B cell (primary cell): ENCODE measurements at regions of chr2 and their contacts with region 1.

Region 1: DNA sequence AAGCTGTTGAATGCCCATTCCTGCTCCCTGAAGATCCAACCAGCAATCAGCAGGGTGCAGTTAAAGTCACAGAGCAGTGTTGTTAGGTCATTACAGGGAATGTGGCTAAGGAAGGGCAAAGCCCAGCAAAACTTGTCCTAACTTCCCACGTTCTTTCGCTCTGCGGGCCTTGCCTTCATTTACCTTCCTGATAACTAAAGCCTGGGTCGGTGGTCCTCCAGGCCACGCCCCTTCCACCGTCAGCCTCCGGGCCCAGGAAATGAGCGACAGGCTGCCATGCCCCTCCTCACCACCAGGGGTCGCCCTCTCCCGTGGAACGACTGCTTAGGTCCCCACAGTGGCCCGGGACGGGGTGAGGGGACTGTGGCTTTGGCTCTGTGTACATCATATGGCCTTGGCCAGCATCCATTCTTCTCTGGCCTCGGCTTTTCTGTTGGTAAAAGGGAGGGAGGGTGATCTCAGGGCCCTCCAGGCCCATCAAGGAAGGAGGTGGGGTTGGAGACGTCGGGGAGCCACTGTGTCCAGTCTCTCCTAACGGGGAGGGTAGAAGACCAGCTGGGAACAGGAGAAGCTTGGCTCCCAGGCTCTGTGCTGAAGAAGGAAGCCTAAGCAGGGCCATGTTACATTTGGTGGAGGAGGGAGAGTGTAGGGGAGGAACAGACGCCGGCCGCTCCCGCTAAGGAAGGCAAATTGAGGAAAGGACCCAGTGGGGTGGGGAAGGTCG is 2.2 kb downstream of the SH2D6 start:
- DNase-seq: peak; percentile 91
- ATAC-seq: peak; percentile 77
- H3K4me3 ChIP-seq: peak overlapping the region in 3 of 5 experiments; percentile 18 to 33 (median 18)
- H3K4me3 Mint-ChIP-seq: peak overlapping the region; percentile 84
- H3K27ac ChIP-seq: peak overlapping the region in 1 of 2 donors; percentile 25
- H3K27ac Mint-ChIP-seq: peak overlapping the region; percentile 92
- H3K4me1 ChIP-seq: peaks cover 23 to 32% of the 10 kb centered on the region in 2 donors
- H3K4me1 Mint-ChIP-seq: peaks cover 28% of the 10 kb centered on the region
- H3K27me3 ChIP-seq: no peaks in the 10 kb centered on the region
- H3K27me3 Mint-ChIP-seq: no peaks in the 10 kb centered on the region
- CTCF ChIP-seq: peak; percentile 100

Region 2: DNA sequence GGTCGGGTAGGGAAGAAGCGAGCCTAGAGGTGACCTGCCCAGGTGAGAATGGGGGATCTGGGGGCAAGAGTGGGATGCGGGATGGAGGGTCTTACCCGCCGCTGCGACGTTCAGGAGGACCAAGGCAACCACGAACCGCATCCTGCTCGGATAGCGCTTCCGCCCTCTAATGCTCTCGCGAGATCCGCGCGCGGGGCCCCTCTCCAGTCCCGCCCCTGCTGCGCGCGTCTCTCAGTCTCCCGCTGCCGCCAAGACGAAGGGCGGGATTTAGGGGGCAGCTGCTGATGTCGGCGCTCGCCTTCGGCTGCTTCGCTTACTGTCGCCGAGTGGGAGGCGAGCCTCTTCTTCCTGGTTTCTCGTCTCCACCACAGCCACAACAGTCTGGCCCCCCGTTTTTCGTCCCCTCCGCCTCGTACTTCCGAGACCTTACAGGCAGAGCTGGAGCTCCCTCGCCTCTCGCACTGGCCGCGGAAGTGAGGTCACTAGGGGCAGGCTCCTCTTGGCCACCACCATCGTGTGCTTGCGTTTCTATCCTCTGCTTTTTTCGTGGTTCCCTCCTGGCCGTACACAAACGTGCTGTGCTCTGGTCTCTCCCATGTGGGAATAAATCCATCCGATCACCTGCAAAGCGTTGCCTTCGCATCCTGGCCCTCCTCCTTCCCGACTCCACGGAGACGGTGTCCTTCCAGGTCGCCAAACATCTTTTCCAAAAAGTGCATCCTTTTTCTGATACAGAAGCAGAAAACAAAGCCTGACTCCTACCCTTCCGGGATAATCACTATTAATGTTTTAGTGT is 92.7 kb before region 1 on chr2 and contains the start of gene TGOLN2:
- CTCF ChIA-PET with region 1: interaction called, 4 read pairs
- POLR2A ChIA-PET with region 1: interaction called, 14 read pairs
- intact Hi-C with region 1: no loop called
- DNase-seq: peak; percentile 97
- ATAC-seq: peak; percentile 90
- H3K4me3 ChIP-seq: peak within 1 kb of the TSS; percentile 44 to 96 (median 86)
- H3K4me3 Mint-ChIP-seq: peak within 1 kb of the TSS; percentile 100
- H3K27ac ChIP-seq: peak within 1 kb of the TSS; percentile 83 to 99
- H3K27ac Mint-ChIP-seq: peak within 1 kb of the TSS; percentile 100
- H3K4me1 ChIP-seq: peaks cover 34 to 42% of the 10 kb centered on the region in 2 donors
- H3K4me1 Mint-ChIP-seq: peaks cover 59% of the 10 kb centered on the region
- H3K27me3 ChIP-seq: no peaks in the 10 kb centered on the region
- H3K27me3 Mint-ChIP-seq: no peaks in the 10 kb centered on the region
- CTCF ChIP-seq: no peak
- total RNA-seq, gene TGOLN2: 172 and 181 TPM in 2 replicates

Region 3: DNA sequence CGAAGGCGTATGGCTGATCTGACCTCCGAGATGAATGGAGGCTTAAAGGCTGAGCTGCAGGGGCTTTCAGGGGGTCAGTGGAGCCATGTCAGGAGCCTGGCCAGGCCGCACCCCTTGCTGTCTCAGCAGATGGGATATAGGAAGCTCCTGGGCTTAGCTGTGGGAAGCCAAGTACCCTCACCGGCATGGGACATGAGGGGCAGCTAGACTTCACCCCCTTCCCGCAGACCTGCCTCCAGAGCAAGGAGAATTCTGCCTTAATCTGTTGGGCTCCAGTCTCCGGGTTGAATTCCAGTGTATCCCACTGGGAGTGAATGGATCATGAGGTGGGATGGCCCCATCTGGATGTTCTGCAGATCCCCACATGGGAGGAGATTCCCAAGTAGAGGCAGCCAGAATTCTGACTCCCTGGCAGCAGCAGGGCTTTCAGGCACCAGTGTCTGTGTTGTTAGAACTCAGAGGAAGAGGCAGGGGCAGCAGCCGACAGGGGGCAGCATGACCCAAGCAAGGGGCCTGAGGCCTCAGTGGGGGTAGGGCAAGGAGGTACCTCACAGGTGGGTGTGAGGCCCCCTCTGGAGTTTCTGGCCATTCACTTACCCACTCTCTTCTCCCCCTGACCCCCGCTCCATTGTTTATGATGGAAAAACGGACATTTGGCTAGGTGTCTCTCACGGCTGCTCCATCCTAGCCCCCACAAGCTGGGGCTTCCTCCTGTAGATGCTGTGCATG is 29.6 kb before region 1 on chr2:
- CTCF ChIA-PET with region 1: interaction called, 67 read pairs
- POLR2A ChIA-PET with region 1: interaction called, 13 read pairs
- intact Hi-C with region 1: loop called (anchors 1 kb)
- DNase-seq: peak; percentile 80
- ATAC-seq: peak; percentile 25
- H3K4me3 ChIP-seq: no peak overlapping the region
- H3K4me3 Mint-ChIP-seq: peak overlapping the region; percentile 15
- H3K27ac ChIP-seq: peak overlapping the region; percentile 68 to 81
- H3K27ac Mint-ChIP-seq: peak overlapping the region; percentile 71
- H3K4me1 ChIP-seq: peaks cover 25 to 26% of the 10 kb centered on the region in 2 donors
- H3K4me1 Mint-ChIP-seq: peaks cover 31% of the 10 kb centered on the region
- H3K27me3 ChIP-seq: no peaks in the 10 kb centered on the region
- H3K27me3 Mint-ChIP-seq: no peaks in the 10 kb centered on the region
- CTCF ChIP-seq: peak; percentile 81

Region 4: GRCh38 chr2:85437488-85438284 is 17.0 kb after region 1 on chr2:
- CTCF ChIA-PET with region 1: interaction called, 25 read pairs
- POLR2A ChIA-PET with region 1: interaction called, 14 read pairs
- intact Hi-C with region 1: loop called (anchors 1 kb)
- DNase-seq: peak; percentile 92
- ATAC-seq: peak; percentile 87
- H3K4me3 ChIP-seq: peak overlapping the region in 4 of 5 experiments; percentile 41 to 65 (median 58)
- H3K4me3 Mint-ChIP-seq: peak overlapping the region; percentile 91
- H3K27ac ChIP-seq: peak overlapping the region; percentile 74 to 86
- H3K27ac Mint-ChIP-seq: peak overlapping the region; percentile 98
- H3K4me1 ChIP-seq: peaks cover 30 to 40% of the 10 kb centered on the region in 2 donors
- H3K4me1 Mint-ChIP-seq: peaks cover 38% of the 10 kb centered on the region
- H3K27me3 ChIP-seq: peaks cover 0 to 2% (median 0%) of the 10 kb centered on the region in 4 experiments
- H3K27me3 Mint-ChIP-seq: no peaks in the 10 kb centered on the region
- CTCF ChIP-seq: no peak

Region 5: GRCh38 chr2:85561317-85561979 is 140.8 kb after region 1 on chr2 and contains the start of gene GGCX:
- CTCF ChIA-PET with region 1: interaction called, 299 read pairs
- POLR2A ChIA-PET with region 1: interaction called, 8 read pairs
- intact Hi-C with region 1: loop called (anchors 2 kb)
- DNase-seq: peak; percentile 96
- ATAC-seq: peak; percentile 91
- H3K4me3 ChIP-seq: peak within 1 kb of the TSS; percentile 60 to 96 (median 88)
- H3K4me3 Mint-ChIP-seq: peak within 1 kb of the TSS; percentile 99
- H3K27ac ChIP-seq: peak within 1 kb of the TSS; percentile 73 to 90
- H3K27ac Mint-ChIP-seq: peak within 1 kb of the TSS; percentile 99
- H3K4me1 ChIP-seq: peaks cover 20 to 28% of the 10 kb centered on the region in 2 donors
- H3K4me1 Mint-ChIP-seq: peaks cover 30% of the 10 kb centered on the region
- H3K27me3 ChIP-seq: no peaks in the 10 kb centered on the region
- H3K27me3 Mint-ChIP-seq: no peaks in the 10 kb centered on the region
- CTCF ChIP-seq: no peak
- total RNA-seq, gene GGCX: 33.0 and 36.8 TPM in 2 replicates

Region 6: DNA sequence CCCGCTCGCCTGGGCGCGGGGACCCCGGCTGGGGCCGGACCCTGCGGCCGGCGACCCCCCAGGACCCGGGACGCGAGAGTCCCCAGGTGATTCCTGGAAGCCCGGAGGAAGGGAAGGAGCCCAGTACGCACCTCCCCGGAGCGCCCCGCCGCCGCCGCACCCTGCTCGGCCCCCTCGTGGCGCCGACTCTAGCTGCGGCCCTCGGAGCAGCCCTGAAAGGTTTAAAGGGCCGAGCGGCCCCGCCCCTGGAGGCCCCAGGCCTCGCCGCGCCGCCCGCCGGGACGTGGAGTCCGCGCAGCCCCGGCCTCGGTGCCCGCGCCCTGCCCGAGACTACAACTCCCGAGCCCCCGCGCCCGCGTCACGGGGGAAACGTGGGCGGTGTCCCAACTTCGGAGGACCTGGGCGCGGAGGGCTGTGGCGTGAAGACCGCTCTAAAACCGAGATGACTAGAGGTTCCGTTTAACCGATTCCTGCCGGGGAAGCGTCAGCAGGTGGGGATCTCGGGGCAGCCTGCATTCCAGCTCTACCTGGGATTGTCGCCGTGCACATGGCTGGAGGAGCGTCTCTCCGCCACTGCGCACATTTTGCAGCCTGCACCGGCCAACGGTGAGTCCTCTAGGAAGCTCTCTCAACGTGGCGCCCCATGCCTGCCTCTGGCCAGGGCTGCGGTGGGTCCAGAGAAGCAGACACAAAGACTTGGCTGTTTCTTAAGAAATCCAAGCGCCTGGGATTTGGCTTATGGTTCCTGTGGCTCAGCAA is 182.0 kb after region 1 on chr2 and contains the start of gene TMEM150A:
- CTCF ChIA-PET with region 1: interaction called, 5 read pairs
- POLR2A ChIA-PET with region 1: interaction called, 6 read pairs
- intact Hi-C with region 1: loop called (anchors 1 kb)
- DNase-seq: peak; percentile 93
- ATAC-seq: peak; percentile 97
- H3K4me3 ChIP-seq: peak within 1 kb of the TSS; percentile 72 to 92 (median 86)
- H3K4me3 Mint-ChIP-seq: peak within 1 kb of the TSS; percentile 95
- H3K27ac ChIP-seq: peak within 1 kb of the TSS; percentile 20 to 74
- H3K27ac Mint-ChIP-seq: peak within 1 kb of the TSS; percentile 89
- H3K4me1 ChIP-seq: peaks cover 17 to 23% of the 10 kb centered on the region in 2 donors
- H3K4me1 Mint-ChIP-seq: peaks cover 30% of the 10 kb centered on the region
- H3K27me3 ChIP-seq: no peaks in the 10 kb centered on the region
- H3K27me3 Mint-ChIP-seq: no peaks in the 10 kb centered on the region
- CTCF ChIP-seq: no peak
- total RNA-seq, gene TMEM150A: 23.0 and 23.1 TPM in 2 replicates